PC-9 (cell line): ENCODE measurements at regions of chr7 and their contacts with region 1.

Region 1: DNA sequence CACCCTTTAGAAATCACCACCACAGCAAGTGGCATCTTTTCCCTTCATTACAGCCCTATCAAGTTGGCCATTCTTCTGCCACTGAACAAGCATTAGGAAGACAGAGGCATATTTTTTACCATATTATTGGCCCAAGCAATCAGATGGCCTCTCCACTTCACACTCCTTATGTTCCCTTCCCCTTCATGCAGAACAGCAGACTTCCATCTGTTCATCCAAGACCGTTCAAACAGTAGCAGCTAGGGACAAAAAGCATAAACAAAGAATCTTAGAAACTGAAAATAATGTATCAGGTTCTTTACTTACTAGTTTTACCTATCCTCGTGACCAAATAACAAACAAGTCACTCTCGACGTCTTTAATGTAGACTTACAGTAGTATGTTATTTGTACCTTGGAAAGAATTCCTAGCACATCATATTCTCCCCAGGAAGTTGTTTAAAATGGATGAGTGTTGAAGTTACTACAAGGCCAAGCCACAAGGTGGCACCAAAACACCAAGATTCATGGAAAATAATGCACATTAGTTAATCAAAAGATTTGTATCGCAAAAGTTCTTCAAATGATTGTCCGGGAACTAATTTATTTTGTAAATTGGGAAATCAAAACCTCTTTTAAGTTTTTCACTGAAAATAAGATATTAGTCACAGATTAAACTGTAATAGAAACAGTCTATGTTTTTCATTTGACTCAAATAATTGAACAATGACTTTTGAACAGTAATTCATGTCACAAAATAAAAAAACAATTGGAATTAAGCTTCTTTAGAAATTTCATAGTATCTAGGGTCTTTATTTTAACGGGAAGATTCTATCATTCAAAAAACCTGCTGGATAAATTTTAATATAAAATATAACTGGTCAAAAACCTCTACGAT is 112.1 kb downstream of the VPS41 start:
- DNase-seq: peak; percentile 46
- H3K4me3 ChIP-seq: no peak overlapping the region
- H3K27ac ChIP-seq: no peak overlapping the region
- H3K4me1 ChIP-seq: no peaks in the 10 kb centered on the region
- H3K27me3 ChIP-seq: no peaks in the 10 kb centered on the region
- CTCF ChIP-seq: peak; percentile 97

Region 2: DNA sequence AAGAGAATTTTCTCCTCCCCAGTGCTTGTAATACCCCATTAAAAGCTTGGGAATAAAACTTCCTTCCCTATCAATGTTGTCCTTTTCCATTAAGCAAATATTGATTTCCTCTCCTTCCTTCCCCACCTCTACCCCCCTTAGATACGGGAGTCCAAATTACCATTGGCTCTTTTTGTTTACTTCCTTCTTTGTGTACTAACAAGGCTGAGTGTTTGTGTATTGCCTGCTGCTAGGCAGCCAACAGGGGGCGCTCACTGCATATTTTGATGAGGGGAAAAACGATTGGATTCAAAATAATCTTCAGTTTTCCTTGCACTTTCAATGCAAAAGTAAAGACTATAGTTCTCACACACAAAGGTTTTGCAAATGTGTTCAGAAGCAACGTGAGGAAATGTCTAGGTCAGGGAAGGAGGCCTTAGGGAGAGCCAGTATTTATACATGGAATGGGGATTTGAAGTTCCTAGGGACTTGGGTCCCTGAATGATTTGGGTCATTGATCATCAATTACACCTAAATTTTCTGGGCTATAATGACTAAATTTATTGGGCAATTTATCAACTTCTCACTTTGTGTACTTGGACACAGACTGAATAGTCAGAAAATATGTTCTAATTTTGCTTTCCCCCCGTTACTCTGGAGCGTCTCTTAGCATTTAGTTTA is 135.8 kb after region 1 on chr7:
- CTCF ChIA-PET with region 1: no interaction called
- POLR2A ChIA-PET with region 1: no interaction called
- intact Hi-C with region 1: loop called (anchors 1 kb)
- DNase-seq: peak; percentile 52 to 58
- H3K4me3 ChIP-seq: no peak overlapping the region
- H3K27ac ChIP-seq: no peak overlapping the region
- H3K4me1 ChIP-seq: peaks cover 14% of the 10 kb centered on the region
- H3K27me3 ChIP-seq: peaks cover 5% of the 10 kb centered on the region; the same call in 1 of the 2 replicates
- CTCF ChIP-seq: peak; percentile 98

Region 3: DNA sequence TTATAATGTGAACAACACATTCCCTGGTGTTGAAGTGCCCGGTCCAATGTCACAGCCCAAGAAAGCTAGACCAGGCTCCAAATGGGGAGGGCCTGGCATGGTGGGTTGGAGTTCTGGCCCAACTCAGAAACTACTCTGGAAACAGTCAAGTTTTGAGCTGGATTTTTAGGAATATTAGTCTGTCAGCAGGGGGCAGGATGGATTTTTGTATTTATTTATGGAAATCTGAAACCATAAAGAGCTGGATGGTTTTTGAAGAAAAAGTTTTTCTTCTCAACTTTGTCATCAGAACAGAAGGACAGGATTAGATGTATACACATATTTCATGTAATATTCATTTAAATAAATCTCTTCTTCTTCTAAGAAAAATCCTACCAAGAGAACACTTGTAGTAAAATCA is 278.3 kb after region 1 on chr7:
- CTCF ChIA-PET with region 1: no interaction called
- POLR2A ChIA-PET with region 1: no interaction called
- intact Hi-C with region 1: loop called (anchors 5 kb)
- DNase-seq: no peak
- H3K4me3 ChIP-seq: no peak overlapping the region
- H3K27ac ChIP-seq: no peak overlapping the region
- H3K4me1 ChIP-seq: no peaks in the 10 kb centered on the region
- H3K27me3 ChIP-seq: peaks cover 60% of the 10 kb centered on the region
- CTCF ChIP-seq: peak; percentile 31; the same call in 1 of the 2 replicates

Region 4: DNA sequence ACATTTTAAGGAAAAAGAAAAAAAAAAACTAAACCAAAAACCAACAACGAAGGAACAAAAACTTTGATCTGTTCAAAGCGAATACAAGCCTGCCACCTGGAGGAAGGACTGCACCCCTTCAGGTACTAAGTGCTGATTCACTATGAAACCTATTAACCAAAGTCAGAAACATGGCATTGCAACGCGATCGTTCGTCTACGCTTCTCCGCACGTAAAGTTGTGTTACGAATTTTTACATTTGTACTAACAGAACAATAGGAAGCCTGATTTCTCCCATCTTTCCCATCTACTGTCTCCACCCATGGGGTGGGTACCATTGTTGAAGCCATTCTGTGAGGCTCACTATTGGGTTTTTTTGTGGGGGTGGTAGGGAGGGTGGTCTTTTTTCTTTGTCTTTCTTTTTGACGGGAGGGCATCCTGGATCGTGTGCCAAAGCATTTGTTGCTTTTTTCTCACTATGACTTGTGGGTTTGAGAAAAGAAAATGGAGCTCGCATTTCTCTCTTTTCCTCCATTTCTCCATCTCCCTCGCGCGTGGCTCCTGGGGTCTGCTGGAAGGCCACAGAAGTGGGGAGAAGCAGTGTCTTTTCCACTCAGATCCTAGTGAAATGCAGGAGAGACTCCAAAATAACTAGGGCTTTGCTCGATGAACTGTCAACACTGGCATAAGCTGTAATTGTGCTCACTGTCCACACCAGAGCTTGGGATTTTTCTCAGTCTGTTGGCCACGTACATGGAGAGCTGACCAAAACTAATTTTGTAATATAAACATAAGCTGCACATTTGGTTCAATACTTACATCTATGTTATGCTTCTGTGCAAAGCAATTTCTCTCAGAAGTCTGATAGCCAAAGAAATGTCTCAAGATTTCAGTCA is 668.4 kb after region 1 on chr7:
- CTCF ChIA-PET with region 1: interaction called, 4 read pairs
- POLR2A ChIA-PET with region 1: no interaction called
- intact Hi-C with region 1: loop called (anchors 1 kb)
- DNase-seq: peak; percentile 52 to 64
- H3K4me3 ChIP-seq: no peak overlapping the region
- H3K27ac ChIP-seq: no peak overlapping the region
- H3K4me1 ChIP-seq: no peaks in the 10 kb centered on the region
- H3K27me3 ChIP-seq: peaks cover 27% of the 10 kb centered on the region
- CTCF ChIP-seq: peak; percentile 93

Region 5: DNA sequence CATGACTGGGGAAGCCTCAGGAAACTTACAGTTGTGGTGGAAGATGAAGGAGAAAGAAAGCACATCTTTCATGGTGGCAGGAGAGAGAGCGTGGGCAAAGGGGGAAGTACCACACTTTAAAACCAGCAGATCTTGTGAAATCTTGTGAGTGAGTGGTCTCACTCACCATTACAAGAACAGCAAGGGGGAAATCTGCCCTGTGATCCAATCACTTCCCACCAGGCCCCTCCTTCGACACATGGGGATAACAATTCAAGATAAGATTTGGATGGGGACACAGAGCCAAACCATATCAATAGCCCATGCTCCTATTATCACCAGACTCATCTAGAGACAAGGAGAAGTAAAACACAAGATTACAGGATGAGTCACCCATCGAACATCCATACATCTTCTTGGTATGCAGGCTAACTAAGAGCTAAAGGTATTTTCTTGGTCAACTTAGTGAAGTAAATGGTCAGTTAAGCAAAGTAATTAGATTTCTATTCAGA is 714.0 kb after region 1 on chr7:
- CTCF ChIA-PET with region 1: no interaction called
- POLR2A ChIA-PET with region 1: no interaction called
- intact Hi-C with region 1: loop called (anchors 1 kb)
- DNase-seq: peak in 1 of 2 experiments; percentile 66
- H3K4me3 ChIP-seq: no peak overlapping the region
- H3K27ac ChIP-seq: no peak overlapping the region
- H3K4me1 ChIP-seq: 0 out of 2 replicates have a peak, but pooled peaks cover under 1% of the 10 kb centered on the region
- H3K27me3 ChIP-seq: no peaks in the 10 kb centered on the region
- CTCF ChIP-seq: no peak

Region 6: DNA sequence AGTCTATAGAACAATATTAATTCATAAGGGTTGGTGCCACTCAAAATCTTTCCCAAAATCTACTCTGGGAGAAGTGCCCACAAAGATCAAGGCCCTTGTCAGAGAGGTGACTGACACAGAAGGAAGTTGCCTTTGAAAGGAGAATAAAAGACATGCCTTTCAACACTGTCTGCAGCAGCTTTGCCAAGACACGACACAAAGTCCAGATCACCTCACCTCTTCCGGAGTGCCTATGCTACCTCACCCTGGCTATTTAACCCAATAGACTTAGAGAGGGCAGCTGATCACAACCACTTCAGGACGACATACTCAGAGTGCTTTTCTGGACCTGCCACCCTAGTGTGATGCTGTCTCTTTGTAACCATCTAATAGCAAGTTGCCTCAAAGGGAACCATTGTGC is 720.4 kb after region 1 on chr7:
- CTCF ChIA-PET with region 1: no interaction called
- POLR2A ChIA-PET with region 1: no interaction called
- intact Hi-C with region 1: loop called (anchors 1 kb)
- DNase-seq: no peak
- H3K4me3 ChIP-seq: no peak overlapping the region
- H3K27ac ChIP-seq: no peak overlapping the region
- H3K4me1 ChIP-seq: no peaks in the 10 kb centered on the region
- H3K27me3 ChIP-seq: no peaks in the 10 kb centered on the region
- CTCF ChIP-seq: no peak